ENCODE measurements at regions of chr5 and their contacts with region 1.

Region 1: GRCh38 chr5:76701298-76701697 is 14.6 kb upstream of the F2R start:
- DNase-seq: peak; percentile 99
- H3K4me3 Mint-ChIP-seq: no peak overlapping the region
- H3K27ac Mint-ChIP-seq: peak overlapping the region; percentile 88
- H3K4me1 Mint-ChIP-seq: peaks cover 27% of the 10 kb centered on the region
- H3K27me3 Mint-ChIP-seq: no peaks in the 10 kb centered on the region
- CTCF ChIP-seq: no peak

Region 2: GRCh38 chr5:76608833-76609232 is 92.5 kb before region 1 on chr5:
- CTCF ChIA-PET with region 1: interaction called, 4 read pairs
- POLR2A ChIA-PET with region 1: interaction called, 3 read pairs
- intact Hi-C with region 1: loop called (anchors 5 kb)
- DNase-seq: no peak
- H3K4me3 Mint-ChIP-seq: no peak overlapping the region
- H3K27ac Mint-ChIP-seq: no peak overlapping the region
- H3K4me1 Mint-ChIP-seq: peaks cover 6% of the 10 kb centered on the region
- H3K27me3 Mint-ChIP-seq: no peaks in the 10 kb centered on the region
- CTCF ChIP-seq: no peak